Heart left ventricle (tissue), 16 donors: ENCODE measurements at regions of chr5 and their contacts with region 1.

Region 1: GRCh38 chr5:150278916-150279315 is 10.7 kb downstream of the CAMK2A start:
- DNase-seq: no peak
- ATAC-seq: no peak
- H3K4me3 ChIP-seq: no peak overlapping the region
- H3K27ac ChIP-seq: no peak overlapping the region
- H3K4me1 ChIP-seq: no peaks in the 10 kb centered on the region
- H3K27me3 ChIP-seq: no peaks in the 10 kb centered on the region
- CTCF ChIP-seq: no peak
- POLR2A ChIP-seq: no peak

Region 2: GRCh38 chr5:150340614-150341255 is 61.8 kb after region 1 on chr5:
- intact Hi-C with region 1: loop called in 1 of 10 experiments (anchors 5 kb)
- DNase-seq: no peak
- ATAC-seq: no peak
- H3K4me3 ChIP-seq: no peak overlapping the region
- H3K27ac ChIP-seq: no peak overlapping the region
- H3K4me1 ChIP-seq: no peaks in the 10 kb centered on the region
- H3K27me3 ChIP-seq: no peaks in the 10 kb centered on the region
- CTCF ChIP-seq: no peak
- POLR2A ChIP-seq: no peak